Naive thymus-derived CD4-positive, alpha-beta T cell (primary cell): ENCODE measurements at regions of chr4 and their contacts with region 1.

Region 1: DNA sequence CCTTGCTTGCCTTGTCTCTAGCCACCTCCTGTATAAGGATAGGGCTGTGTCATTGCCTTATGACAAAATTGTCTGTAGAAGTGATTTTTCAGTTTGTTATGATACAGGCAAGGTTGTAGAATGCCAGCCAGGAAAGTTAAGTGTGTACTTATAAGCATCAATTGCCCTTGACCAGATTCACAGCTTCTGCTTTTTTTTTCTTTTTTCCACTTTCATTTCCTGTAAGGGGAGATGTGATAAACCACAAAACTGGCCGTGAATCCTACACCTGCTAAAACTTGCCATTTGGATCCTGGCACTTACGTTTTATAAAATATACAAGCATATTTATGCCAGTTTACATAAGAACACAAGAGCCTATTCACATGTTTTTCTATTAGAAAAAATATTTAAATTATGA is 35.0 kb upstream of the BMPR1B start:
- DNase-seq: no peak
- ATAC-seq: no peak
- H3K4me3 ChIP-seq: no peak overlapping the region
- H3K4me3 Mint-ChIP-seq: no peak overlapping the region
- H3K27ac ChIP-seq: no peak overlapping the region
- H3K27ac Mint-ChIP-seq: no peak overlapping the region
- H3K4me1 ChIP-seq: no peaks in the 10 kb centered on the region
- H3K4me1 Mint-ChIP-seq: no peaks in the 10 kb centered on the region
- H3K27me3 ChIP-seq: no peaks in the 10 kb centered on the region
- H3K27me3 Mint-ChIP-seq: peaks cover 0 to 11% (median 0%) of the 10 kb centered on the region in 5 donors

Region 2: GRCh38 chr4:95095348-95095974 is 372.7 kb after region 1 on chr4:
- CTCF ChIA-PET with region 1: no interaction called
- POLR2A ChIA-PET with region 1: no interaction called
- intact Hi-C with region 1: loop called in 1 of 2 experiments (anchors 1 kb)
- DNase-seq: peak in 2 of 9 donors; percentile 17 to 29
- ATAC-seq: no peak
- H3K4me3 ChIP-seq: no peak overlapping the region
- H3K4me3 Mint-ChIP-seq: no peak overlapping the region
- H3K27ac ChIP-seq: no peak overlapping the region
- H3K27ac Mint-ChIP-seq: no peak overlapping the region
- H3K4me1 ChIP-seq: no peaks in the 10 kb centered on the region
- H3K4me1 Mint-ChIP-seq: peaks cover 0 to 18% (median 8%) of the 10 kb centered on the region in 7 donors
- H3K27me3 ChIP-seq: no peaks in the 10 kb centered on the region
- H3K27me3 Mint-ChIP-seq: peaks cover 0 to 19% (median 0%) of the 10 kb centered on the region in 5 donors